GM12878 (cell line): ENCODE measurements at regions of chr2 and their contacts with region 1.

Region 1: DNA sequence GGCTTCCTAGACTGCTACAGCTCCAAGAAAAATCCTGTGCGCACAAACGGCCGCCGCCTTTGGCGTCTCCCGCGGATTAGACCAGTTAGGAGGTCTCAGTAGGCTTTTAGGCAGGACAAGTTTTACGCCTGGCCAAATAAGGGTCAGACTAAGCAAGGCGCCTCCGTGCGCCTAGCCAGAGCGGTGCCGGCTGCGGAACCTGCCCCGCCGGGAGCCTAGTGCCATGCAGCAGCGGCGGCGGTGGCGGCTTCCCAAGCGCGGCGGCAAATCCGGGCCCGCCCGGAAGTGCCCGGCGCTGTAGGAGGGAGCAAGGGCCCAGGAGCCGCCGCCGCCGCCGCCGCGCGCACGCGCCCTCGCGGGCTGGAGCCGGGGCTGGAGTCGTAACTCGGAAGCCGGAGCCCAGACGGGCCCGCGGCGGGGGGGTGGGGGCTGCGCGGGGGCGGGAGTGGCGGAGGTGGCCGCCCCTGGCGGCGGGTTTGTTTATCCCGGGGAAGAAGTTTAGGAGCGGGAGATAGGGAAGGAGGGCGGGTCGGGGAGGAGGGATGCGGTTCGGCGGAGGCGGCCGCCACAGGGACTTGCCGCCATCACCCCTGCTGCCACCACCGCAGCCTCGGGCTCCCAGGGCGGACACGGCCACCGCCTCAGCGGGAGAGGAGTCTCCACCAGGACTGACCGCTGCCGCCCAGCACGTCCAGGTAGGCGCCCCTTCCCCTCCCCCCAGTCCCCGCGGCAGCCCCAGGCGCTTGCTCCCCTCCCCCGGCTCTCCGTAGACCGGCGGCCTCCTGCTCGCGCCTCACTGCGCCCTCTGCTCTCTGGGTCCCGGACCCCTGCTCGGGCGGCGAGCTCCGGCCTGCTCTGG is at the start of gene SPOPL:
- DNase-seq: no peak
- ATAC-seq: peak; percentile 86
- H3K4me3 ChIP-seq: peak within 1 kb of the TSS; percentile 80
- H3K27ac ChIP-seq: peak within 1 kb of the TSS; percentile 91
- H3K4me1 ChIP-seq: peaks cover 16% of the 10 kb centered on the region
- H3K27me3 ChIP-seq: no peaks in the 10 kb centered on the region
- CTCF ChIP-seq: peak in 1 of 3 experiments; percentile 6; a peak in 1 of 6 replicates
- EP300 ChIP-seq: no peak
- POLR2A ChIP-seq: peak; percentile 88
- RAD21 ChIP-seq: no peak
- polyA plus RNA-seq, gene SPOPL: 4.2 to 4.4 TPM

Region 2: GRCh38 chr2:138516030-138516704 is 14.5 kb after region 1 on chr2:
- CTCF ChIA-PET with region 1: interaction called, 15 read pairs
- POLR2A ChIA-PET with region 1: interaction called, 29 read pairs
- RAD21 ChIA-PET with region 1: interaction called, 31 read pairs
- SMC1A ChIA-PET with region 1: interaction called, 142 read pairs
- in situ Hi-C with region 1: no loop called
- intact Hi-C with region 1: no loop called
- DNase-seq: no peak
- ATAC-seq: peak; percentile 26; the same call in 2 of the 3 replicates
- H3K4me3 ChIP-seq: no peak overlapping the region
- H3K27ac ChIP-seq: no peak overlapping the region
- H3K4me1 ChIP-seq: peaks cover 8% of the 10 kb centered on the region; the same call in 1 of the 2 replicates
- H3K27me3 ChIP-seq: no peaks in the 10 kb centered on the region
- CTCF ChIP-seq: no peak
- EP300 ChIP-seq: no peak
- POLR2A ChIP-seq: no peak
- RAD21 ChIP-seq: no peak

Region 3: DNA sequence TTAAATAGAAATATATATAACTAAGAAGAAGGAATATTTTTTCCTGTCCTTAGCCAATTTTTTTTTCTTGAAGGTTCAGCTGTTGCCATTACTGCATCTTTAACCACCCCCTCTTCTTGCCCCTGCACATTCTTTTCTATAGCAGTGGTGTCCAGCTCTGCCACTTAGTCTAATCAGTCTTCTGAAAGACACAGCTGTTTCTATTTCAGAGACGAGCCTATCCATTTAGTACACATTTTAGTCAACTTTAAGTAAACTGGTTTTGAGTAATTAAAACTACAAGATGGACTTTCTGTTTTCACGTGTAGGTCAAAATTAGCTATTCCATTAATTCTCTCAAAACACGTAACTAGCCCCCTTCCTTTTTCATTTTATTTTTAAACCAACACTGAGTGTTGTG is 20.9 kb after region 1 on chr2:
- CTCF ChIA-PET with region 1: interaction called, 15 read pairs
- POLR2A ChIA-PET with region 1: interaction called, 29 read pairs
- RAD21 ChIA-PET with region 1: interaction called, 31 read pairs
- SMC1A ChIA-PET with region 1: interaction called, 142 read pairs
- in situ Hi-C with region 1: no loop called
- intact Hi-C with region 1: no loop called
- DNase-seq: no peak
- ATAC-seq: peak; percentile 81
- H3K4me3 ChIP-seq: peak overlapping the region; percentile 36; the same call in 1 of the 2 replicates
- H3K27ac ChIP-seq: peak overlapping the region; percentile 84
- H3K4me1 ChIP-seq: peaks cover 26% of the 10 kb centered on the region
- H3K27me3 ChIP-seq: no peaks in the 10 kb centered on the region
- CTCF ChIP-seq: no peak
- EP300 ChIP-seq: no peak
- POLR2A ChIP-seq: no peak
- RAD21 ChIP-seq: no peak

Region 4: DNA sequence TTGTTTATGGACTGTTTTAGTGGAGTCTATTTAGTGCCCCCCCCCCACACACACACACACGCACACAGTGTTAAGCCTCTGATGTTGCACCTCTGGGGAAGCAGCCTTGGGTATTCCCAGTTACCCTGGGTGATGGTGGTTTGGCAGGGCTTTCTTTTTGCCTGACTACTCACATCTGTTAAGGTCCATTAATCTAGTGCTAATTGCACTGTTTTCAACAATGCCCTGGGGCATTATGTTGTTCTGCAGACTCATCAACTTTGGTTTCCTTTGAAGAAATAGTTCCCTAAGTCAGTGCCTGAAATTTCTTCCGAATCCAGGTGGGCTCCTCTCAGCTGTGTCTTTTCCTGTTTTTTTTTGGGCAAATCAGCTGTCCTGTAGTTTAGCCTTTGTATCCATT is 34.6 kb after region 1 on chr2:
- CTCF ChIA-PET with region 1: interaction called, 5 read pairs
- POLR2A ChIA-PET with region 1: interaction called, 8 read pairs
- RAD21 ChIA-PET with region 1: interaction called, 8 read pairs
- SMC1A ChIA-PET with region 1: interaction called, 24 read pairs
- in situ Hi-C with region 1: no loop called
- intact Hi-C with region 1: no loop called
- DNase-seq: peak; percentile 61
- ATAC-seq: peak; percentile 95
- H3K4me3 ChIP-seq: no peak overlapping the region
- H3K27ac ChIP-seq: peak overlapping the region; percentile 2; the same call in 1 of the 2 replicates
- H3K4me1 ChIP-seq: no peaks in the 10 kb centered on the region; the same call in 1 of the 2 replicates
- H3K27me3 ChIP-seq: no peaks in the 10 kb centered on the region
- CTCF ChIP-seq: no peak
- EP300 ChIP-seq: 0 out of 4 replicates have a peak, but pooled peaks of 1 of the 2 experiments have one; percentile 19
- POLR2A ChIP-seq: no peak
- RAD21 ChIP-seq: no peak

Region 5: GRCh38 chr2:138712212-138712979 is 210.7 kb after region 1 on chr2:
- CTCF ChIA-PET with region 1: no interaction called
- POLR2A ChIA-PET with region 1: no interaction called
- RAD21 ChIA-PET with region 1: no interaction called
- SMC1A ChIA-PET with region 1: interaction called, 3 read pairs
- in situ Hi-C with region 1: no loop called
- intact Hi-C with region 1: loop called (anchors 10 kb)
- DNase-seq: peak; percentile 61
- ATAC-seq: peak; percentile 93
- H3K4me3 ChIP-seq: no peak overlapping the region
- H3K27ac ChIP-seq: no peak overlapping the region
- H3K4me1 ChIP-seq: peaks cover 14% of the 10 kb centered on the region; the same call in 1 of the 2 replicates
- H3K27me3 ChIP-seq: no peaks in the 10 kb centered on the region; a peak in 1 of 4 replicates
- CTCF ChIP-seq: no peak
- EP300 ChIP-seq: peak; percentile 49 to 74; a peak in 2 of 4 replicates
- POLR2A ChIP-seq: no peak
- RAD21 ChIP-seq: no peak